Common myeloid progenitor, CD34-positive (primary cell): ENCODE measurements at regions of chr11 and their contacts with region 1.

Region 1: DNA sequence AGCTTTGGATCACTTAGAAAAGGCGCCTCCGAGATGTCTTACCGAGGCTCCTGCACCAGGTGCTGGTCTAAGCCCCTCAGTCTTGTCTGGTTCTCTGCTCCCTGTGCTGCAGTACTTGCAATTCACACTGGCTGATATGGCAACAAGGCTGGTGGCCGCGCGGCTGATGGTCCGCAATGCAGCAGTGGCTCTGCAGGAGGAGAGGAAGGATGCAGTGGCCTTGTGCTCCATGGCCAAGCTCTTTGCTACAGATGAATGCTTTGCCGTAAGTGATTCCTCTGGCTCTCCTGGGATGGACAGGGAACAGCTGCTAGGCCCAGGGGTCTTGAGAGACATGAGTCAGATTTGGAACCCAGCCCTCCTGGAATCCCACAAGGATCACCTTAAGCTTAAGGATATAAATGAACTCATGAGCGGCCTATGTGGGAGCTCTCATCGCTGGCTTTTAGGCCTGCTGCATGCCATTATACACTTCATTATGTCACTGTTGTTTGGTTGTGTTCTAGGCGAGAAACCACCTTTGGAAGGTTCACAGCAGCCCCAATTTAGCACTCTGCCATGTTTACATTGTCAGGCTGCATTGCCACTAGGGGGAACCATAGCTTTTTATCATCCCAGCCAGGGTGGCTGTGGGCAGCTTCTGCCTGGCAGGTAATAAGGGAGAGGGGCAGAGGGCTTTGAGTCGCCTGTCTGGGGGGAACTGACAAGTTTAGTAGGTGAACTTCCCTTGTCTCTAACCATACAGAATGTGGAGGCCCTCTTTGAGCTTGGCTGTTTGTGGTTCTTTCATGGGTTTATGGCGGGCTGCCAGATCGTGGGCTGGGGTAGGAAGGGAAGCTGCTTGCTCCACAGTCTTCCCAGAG is 8.5 kb downstream of the ACAD8 start:
- DNase-seq: peak in 2 of 3 donors; percentile 45 to 49
- H3K4me3 ChIP-seq: no peak overlapping the region
- H3K27ac ChIP-seq: no peak overlapping the region
- H3K4me1 ChIP-seq: peaks cover 2 to 28% (median 15%) of the 10 kb centered on the region in 4 experiments
- H3K27me3 ChIP-seq: no peaks in the 10 kb centered on the region

Region 2: GRCh38 chr11:134052988-134053945 is 208.6 kb before region 1 on chr11:
- CTCF ChIA-PET with region 1: no interaction called
- POLR2A ChIA-PET with region 1: no interaction called
- DNase-seq: no peak
- H3K4me3 ChIP-seq: no peak overlapping the region
- H3K27ac ChIP-seq: no peak overlapping the region
- H3K4me1 ChIP-seq: peaks cover 0 to 24% (median 10%) of the 10 kb centered on the region in 4 experiments
- H3K27me3 ChIP-seq: peaks cover 0 to 13% (median 4%) of the 10 kb centered on the region in 5 experiments

Region 3: GRCh38 chr11:134275534-134276395 is 13.9 kb after region 1 on chr11 and contains the start of gene GLB1L3:
- CTCF ChIA-PET with region 1: interaction called, 40 read pairs
- POLR2A ChIA-PET with region 1: no interaction called
- DNase-seq: peak; percentile 68 to 82 (median 82)
- H3K4me3 ChIP-seq: peak within 1 kb of the TSS; percentile 40 to 72 (median 44)
- H3K27ac ChIP-seq: no peak within 1 kb of the TSS
- H3K4me1 ChIP-seq: peaks cover 0 to 22% (median 19%) of the 10 kb centered on the region in 4 experiments
- H3K27me3 ChIP-seq: peaks cover 14 to 94% (median 50%) of the 10 kb centered on the region in 5 experiments

Region 4: DNA sequence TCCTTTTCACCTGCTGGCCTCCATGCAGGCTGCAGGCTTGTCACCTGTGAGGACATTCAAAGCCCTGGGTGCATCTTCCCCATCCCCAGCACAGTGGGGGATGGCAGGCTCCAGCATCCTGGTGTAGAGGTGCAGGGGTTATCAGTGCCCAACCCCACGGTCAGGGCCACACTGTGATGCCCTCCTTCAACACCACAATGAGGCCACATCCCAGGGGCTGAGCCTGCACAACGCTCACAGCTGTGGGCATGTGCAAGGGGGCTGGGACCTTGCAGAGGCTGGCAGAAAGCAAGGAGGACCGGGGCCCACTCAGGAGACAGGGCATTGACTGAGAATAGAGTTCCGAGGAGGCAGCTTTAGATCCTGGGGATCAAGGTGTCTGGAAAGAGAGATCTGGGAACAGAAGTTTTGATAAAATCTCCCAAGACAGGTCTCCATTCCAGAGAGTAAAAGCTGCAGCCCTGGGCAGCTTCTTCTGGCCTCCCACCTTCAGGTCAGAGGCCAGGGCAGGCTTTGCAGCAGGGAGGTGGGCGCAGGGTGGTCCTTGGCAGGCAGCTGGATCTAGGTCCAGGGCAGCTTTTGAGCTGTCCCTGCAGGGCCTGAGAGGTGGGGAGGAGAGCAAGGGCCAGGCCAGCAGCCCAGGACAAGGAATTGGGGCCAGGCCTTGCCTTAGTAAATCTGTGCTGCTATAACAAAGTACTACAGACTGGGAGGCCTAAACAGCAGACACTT is 400.9 kb after region 1 on chr11:
- CTCF ChIA-PET with region 1: no interaction called
- POLR2A ChIA-PET with region 1: no interaction called
- DNase-seq: no peak
- H3K4me3 ChIP-seq: no peak overlapping the region
- H3K27ac ChIP-seq: no peak overlapping the region
- H3K4me1 ChIP-seq: no peaks in the 10 kb centered on the region
- H3K27me3 ChIP-seq: peaks cover 0 to 4% (median 0%) of the 10 kb centered on the region in 5 experiments